Heart right ventricle (tissue), 16 donors: ENCODE measurements at regions of chr1 and their contacts with region 1.

Region 1: DNA sequence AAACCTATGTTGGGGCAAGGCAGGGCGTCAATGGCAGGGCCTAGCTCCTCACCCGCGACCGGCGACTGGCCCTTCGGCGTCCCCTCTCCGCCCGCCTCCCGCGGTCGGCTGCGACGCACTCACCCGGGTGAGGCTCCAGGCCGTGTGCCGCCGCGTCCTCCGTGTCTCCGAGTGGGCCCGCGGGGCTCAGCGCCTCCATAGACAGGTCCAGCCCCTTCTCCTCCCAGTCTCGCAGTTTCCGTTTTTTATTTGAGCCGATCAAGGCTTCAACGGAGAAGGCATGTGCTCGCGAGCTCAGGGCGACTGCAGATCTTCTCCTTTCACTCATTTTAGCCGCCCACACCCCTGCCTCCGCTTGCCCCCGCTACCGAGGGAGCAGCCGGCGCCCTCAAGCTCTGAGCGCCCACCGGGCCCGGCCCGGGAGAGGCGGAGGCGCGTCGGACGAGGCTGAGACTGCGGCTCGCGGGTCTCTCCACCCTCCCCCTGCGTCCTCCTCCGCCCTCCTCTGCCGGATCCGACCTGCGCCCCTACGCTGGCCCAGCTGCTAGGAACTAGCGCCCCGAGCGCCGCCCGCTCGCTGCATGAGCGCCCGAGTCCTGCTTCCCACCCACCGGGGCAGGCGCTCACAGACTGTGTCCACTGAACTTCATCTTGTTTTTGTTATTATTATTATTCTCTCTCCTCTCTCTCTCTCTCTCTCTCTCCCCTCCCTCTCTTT is 516 bp downstream of the TBX15 start:
- DNase-seq: no peak
- ATAC-seq: peak; percentile 31 to 65 (median 52)
- H3K4me3 ChIP-seq: peak overlapping the region; percentile 25 to 62 (median 48)
- H3K27ac ChIP-seq: peak overlapping the region in 6 of 10 donors; percentile 6 to 80 (median 52)
- H3K4me1 ChIP-seq: peaks cover 0 to 55% (median 39%) of the 10 kb centered on the region in 9 donors
- H3K27me3 ChIP-seq: peaks cover 33 to 100% (median 100%) of the 10 kb centered on the region in 7 donors
- CTCF ChIP-seq: no peak

Region 2: DNA sequence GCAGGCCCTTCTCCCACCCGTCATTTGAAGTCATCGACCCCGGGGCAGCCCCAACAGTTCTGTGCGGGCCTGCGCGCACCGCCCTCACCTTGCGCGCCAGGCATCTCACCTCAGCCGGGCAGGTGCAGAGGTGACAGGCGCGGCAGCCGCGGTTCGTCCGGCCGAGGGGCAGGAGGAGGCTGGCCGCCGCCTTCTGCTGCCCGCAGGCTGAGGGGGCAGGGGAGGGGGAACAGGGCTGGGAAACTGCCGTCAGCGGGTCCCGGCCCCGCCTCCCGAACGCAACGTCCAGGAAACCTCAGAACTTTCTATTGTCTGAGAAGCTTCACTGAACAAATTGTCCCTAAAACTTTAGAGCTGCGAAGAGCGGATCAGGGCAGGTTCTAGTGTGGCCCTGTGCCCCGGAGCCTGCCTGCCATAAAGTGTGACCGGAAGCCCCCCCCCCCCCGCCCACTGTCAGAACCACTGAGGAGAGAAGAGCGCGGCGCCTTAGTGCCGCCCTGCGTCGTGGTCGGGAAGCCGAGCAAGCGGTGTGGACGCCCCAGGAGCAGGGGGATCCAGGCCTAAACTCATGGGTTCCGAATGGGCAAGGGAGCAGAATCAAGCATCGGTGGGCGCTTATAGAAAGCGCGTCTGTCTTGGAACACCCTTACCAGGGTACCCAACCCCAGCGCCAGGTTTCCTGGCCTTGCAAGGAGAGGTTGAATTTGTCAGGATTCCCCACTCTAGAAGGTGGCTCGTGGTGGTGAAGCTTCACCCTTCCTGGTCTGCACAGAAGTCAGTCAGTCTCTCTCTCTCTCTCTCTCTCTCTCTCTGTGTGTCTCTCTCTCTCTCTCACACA is 13.8 kb after region 1 on chr1:
- intact Hi-C with region 1: loop called in 1 of 10 experiments (anchors 1 kb)
- DNase-seq: no peak
- ATAC-seq: peak in 5 of 8 donors; percentile 35 to 57 (median 47)
- H3K4me3 ChIP-seq: peak overlapping the region in 9 of 10 donors; percentile 7 to 46 (median 37)
- H3K27ac ChIP-seq: no peak overlapping the region
- H3K4me1 ChIP-seq: peaks cover under 1 to 24% (median 15%) of the 10 kb centered on the region in 9 donors
- H3K27me3 ChIP-seq: peaks cover 16 to 99% (median 98%) of the 10 kb centered on the region in 7 donors
- CTCF ChIP-seq: no peak